Activated CD4-positive, alpha-beta T cell treated with anti-CD3 and anti-CD28 coated beads for 36 hours (primary cell): ENCODE measurements at regions of chr15 and their contacts with region 1.

Region 1: GRCh38 chr15:45346381-45346780 is 32.0 kb downstream of the GATM start:
- DNase-seq: no peak
- ATAC-seq: no peak
- H3K4me3 Mint-ChIP-seq: no peak overlapping the region
- H3K27ac Mint-ChIP-seq: no peak overlapping the region
- H3K4me1 Mint-ChIP-seq: no peaks in the 10 kb centered on the region
- H3K27me3 Mint-ChIP-seq: peaks cover 31% of the 10 kb centered on the region

Region 2: DNA sequence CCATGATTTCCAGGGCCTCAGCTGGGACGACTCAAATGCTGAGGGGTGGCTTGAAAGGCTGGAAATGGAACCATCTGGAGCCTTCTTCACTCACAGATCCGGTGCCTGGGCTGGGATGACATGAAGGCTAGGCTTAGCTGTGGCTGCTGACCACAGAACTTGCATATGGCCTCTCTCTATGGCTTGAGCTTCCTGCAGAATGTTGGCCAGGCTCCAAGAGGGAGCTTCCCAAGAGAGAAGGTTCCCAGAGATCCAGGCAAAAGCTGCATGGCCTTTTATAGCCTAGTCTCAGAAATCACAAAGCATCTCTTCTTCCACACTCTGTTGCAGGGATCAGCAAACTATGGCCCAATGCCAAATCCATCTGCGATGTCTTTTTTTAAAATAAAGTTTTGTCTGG is 12.8 kb before region 1 on chr15:
- CTCF ChIA-PET with region 1: interaction called, 4 read pairs
- POLR2A ChIA-PET with region 1: no interaction called
- intact Hi-C with region 1: loop called in 1 of 2 experiments (anchors 1 kb)
- DNase-seq: no peak
- ATAC-seq: no peak
- H3K4me3 Mint-ChIP-seq: no peak overlapping the region
- H3K27ac Mint-ChIP-seq: no peak overlapping the region
- H3K4me1 Mint-ChIP-seq: peaks cover 6% of the 10 kb centered on the region
- H3K27me3 Mint-ChIP-seq: no peaks in the 10 kb centered on the region